Right cardiac atrium (tissue), 5 donors: ENCODE measurements at regions of chr6 and their contacts with region 1.

Region 1: GRCh38 chr6:137094411-137095008 is 49.7 kb upstream of the IL20RA start:
- DNase-seq: peak in 2 of 3 donors; percentile 35 to 61
- ATAC-seq: peak; percentile 69 to 81
- H3K4me3 ChIP-seq: no peak overlapping the region
- H3K27ac ChIP-seq: no peak overlapping the region
- H3K4me1 ChIP-seq: peaks cover 6% of the 10 kb centered on the region
- H3K27me3 ChIP-seq: no peaks in the 10 kb centered on the region

Region 2: DNA sequence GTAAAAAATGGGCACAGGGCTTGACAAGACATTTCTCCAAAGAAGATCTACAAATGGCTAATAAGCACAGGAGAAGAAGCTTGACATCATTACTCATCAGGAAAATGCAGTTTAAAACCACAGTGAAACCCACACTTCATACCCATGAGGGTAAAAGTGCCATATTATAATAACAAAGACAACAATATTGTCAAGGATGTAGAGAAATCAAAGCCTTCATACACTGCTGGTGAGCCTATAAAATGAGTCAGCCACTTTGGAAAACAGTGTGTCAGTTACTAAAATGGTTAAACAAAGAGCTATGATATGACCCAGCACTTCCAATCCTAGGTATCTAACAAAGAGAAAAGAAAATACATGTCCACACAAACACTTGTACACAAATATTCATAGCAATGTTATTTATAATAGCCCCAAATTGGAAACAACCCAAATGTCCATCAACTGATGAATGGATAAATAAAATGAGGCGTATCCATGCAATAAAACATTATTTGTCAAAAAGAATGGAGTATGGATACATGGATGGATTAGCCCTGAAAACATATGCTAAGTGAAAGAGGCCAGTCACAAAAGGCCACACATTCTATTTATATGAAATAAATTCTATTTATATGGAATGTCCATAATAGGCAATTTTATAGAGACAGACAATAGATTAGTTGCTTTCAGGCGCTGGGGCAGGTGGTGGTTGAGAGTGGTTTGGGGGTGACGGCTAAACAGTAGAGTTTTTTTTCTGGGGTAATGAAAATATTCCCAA is 38.2 kb before region 1 on chr6:
- intact Hi-C with region 1: no loop called
- DNase-seq: no peak
- ATAC-seq: no peak
- H3K4me3 ChIP-seq: no peak overlapping the region
- H3K27ac ChIP-seq: no peak overlapping the region
- H3K4me1 ChIP-seq: no peaks in the 10 kb centered on the region
- H3K27me3 ChIP-seq: no peaks in the 10 kb centered on the region

Region 3: GRCh38 chr6:137191670-137192069 is 97.2 kb after region 1 on chr6:
- intact Hi-C with region 1: loop called in 1 of 4 experiments (anchors 10 kb)
- DNase-seq: no peak
- ATAC-seq: no peak
- H3K4me3 ChIP-seq: no peak overlapping the region
- H3K27ac ChIP-seq: peak overlapping the region; percentile 13
- H3K4me1 ChIP-seq: peaks cover 4% of the 10 kb centered on the region
- H3K27me3 ChIP-seq: no peaks in the 10 kb centered on the region

Region 4: GRCh38 chr6:137218917-137219663 is 124.6 kb after region 1 on chr6 and contains the start of gene IFNGR1:
- intact Hi-C with region 1: loop called in 1 of 4 experiments (anchors 10 kb)
- DNase-seq: peak; percentile 98 to 100 (median 99)
- ATAC-seq: peak; percentile 98
- H3K4me3 ChIP-seq: peak within 1 kb of the TSS; percentile 83
- H3K27ac ChIP-seq: peak within 1 kb of the TSS; percentile 88
- H3K4me1 ChIP-seq: peaks cover 14% of the 10 kb centered on the region
- H3K27me3 ChIP-seq: no peaks in the 10 kb centered on the region
- total RNA-seq, gene IFNGR1: 115 to 157 (median 141) TPM

Region 5: GRCh38 chr6:137271245-137272183 is 177.0 kb after region 1 on chr6:
- intact Hi-C with region 1: loop called in 1 of 4 experiments (anchors 10 kb)
- DNase-seq: no peak
- ATAC-seq: peak; percentile 68 to 74
- H3K4me3 ChIP-seq: no peak overlapping the region
- H3K27ac ChIP-seq: no peak overlapping the region
- H3K4me1 ChIP-seq: no peaks in the 10 kb centered on the region
- H3K27me3 ChIP-seq: no peaks in the 10 kb centered on the region

Region 6: GRCh38 chr6:137313928-137314855 is 219.7 kb after region 1 on chr6:
- intact Hi-C with region 1: loop called in 2 of 4 experiments (anchors 5 kb)
- DNase-seq: peak; percentile 76 to 91 (median 82)
- ATAC-seq: peak; percentile 88 to 95
- H3K4me3 ChIP-seq: peak overlapping the region; percentile 52
- H3K27ac ChIP-seq: no peak overlapping the region
- H3K4me1 ChIP-seq: peaks cover 5% of the 10 kb centered on the region
- H3K27me3 ChIP-seq: no peaks in the 10 kb centered on the region

Region 7: DNA sequence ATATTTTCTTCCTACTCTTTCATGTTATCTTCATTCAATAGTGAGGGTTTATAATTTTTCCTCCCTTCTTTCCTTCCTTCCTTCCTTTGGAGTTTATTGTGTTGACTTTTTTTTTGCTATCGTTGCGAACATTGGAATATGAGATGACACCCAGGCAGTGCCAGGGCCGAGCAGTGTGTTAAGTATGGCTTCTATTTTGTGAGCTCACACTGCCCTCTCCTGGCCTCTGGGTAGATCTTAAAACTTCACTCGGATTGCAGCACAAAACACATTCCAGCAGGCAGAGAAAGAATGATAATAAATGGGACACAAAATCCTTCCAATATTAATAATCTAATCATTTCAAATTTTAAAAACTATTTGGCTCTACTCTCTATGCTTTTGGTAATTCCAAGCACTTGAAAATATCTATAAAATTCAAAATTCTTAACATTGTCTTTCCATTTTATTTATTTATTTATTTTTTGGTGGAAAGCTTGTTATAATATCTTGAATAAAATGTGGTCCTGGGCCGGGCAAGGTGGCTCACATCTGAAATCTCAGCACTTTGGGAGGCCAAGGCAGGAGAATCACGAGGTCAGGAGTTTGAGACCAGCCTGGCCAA is 547.1 kb after region 1 on chr6:
- intact Hi-C with region 1: loop called in 3 of 4 experiments (anchors 10 kb)
- DNase-seq: peak; percentile 60 to 87 (median 62)
- ATAC-seq: peak; percentile 86 to 89
- H3K4me3 ChIP-seq: no peak overlapping the region
- H3K27ac ChIP-seq: no peak overlapping the region
- H3K4me1 ChIP-seq: peaks cover 1% of the 10 kb centered on the region
- H3K27me3 ChIP-seq: no peaks in the 10 kb centered on the region

Region 8: GRCh38 chr6:138719011-138719635 is 1624.6 kb after region 1 on chr6:
- intact Hi-C with region 1: no loop called
- DNase-seq: no peak
- ATAC-seq: peak; percentile 31 to 32
- H3K4me3 ChIP-seq: no peak overlapping the region
- H3K27ac ChIP-seq: peak overlapping the region; percentile 17
- H3K4me1 ChIP-seq: peaks cover 4% of the 10 kb centered on the region
- H3K27me3 ChIP-seq: no peaks in the 10 kb centered on the region